ENCODE measurements at regions of chrX and their contacts with region 1.

Region 1: DNA sequence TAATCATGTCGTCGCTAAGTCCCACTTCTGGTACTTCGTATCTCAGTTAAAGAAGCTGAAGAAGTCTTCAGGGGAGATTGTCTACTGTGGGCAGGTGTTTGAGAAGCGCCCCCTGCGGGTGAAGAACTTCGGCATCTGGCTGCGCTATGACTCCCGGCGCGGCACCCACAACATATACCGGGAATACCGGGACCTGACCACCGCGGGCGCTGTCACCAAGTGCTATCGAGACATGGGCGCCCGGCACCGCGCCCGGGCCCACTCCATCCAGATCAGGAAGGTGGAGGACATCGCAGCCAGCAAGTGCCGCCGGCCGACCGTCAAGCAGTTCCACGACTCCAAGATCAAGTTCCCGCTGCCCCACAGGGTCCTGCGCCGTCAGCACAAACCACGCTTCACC is 11.3 kb downstream of the PNCK start:
- DNase-seq: peak; percentile 60
- H3K4me3 Mint-ChIP-seq: no peak overlapping the region
- H3K27ac Mint-ChIP-seq: no peak overlapping the region
- H3K4me1 Mint-ChIP-seq: peaks cover 7% of the 10 kb centered on the region
- H3K27me3 Mint-ChIP-seq: peaks cover 80% of the 10 kb centered on the region
- CTCF ChIP-seq: peak; percentile 24

Region 2: DNA sequence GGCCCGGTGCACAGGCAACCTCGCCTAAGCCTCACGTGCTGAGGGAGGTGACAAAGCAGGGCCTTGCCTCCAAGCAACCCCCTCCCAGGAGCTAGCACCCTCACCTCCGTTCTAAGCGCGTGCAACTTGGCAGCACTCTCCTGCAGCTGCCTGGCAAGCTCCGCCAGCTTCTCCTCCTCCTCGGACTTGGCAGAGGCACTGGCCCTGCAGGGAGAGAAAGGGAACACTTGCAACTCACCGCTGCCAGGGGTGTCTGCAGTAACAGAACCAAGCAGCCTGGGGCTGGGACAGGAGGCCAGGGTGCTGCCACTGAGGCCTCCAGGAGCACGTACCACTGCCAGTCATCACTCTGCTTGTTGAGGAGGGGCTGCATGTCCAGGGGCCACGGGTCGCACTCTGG is 206.1 kb before region 1 on chrX:
- CTCF ChIA-PET with region 1: no interaction called
- intact Hi-C with region 1: no loop called
- DNase-seq: no peak
- H3K4me3 Mint-ChIP-seq: no peak overlapping the region
- H3K27ac Mint-ChIP-seq: no peak overlapping the region
- H3K4me1 Mint-ChIP-seq: no peaks in the 10 kb centered on the region
- H3K27me3 Mint-ChIP-seq: no peaks in the 10 kb centered on the region
- CTCF ChIP-seq: no peak

Region 3: GRCh38 chrX:153554519-153555167 is 107.6 kb before region 1 on chrX:
- CTCF ChIA-PET with region 1: interaction called, 7 read pairs
- intact Hi-C with region 1: loop called (anchors 2 kb)
- DNase-seq: peak; percentile 72
- H3K4me3 Mint-ChIP-seq: no peak overlapping the region
- H3K27ac Mint-ChIP-seq: no peak overlapping the region
- H3K4me1 Mint-ChIP-seq: no peaks in the 10 kb centered on the region
- H3K27me3 Mint-ChIP-seq: peaks cover 98% of the 10 kb centered on the region
- CTCF ChIP-seq: peak; percentile 76

Region 4: DNA sequence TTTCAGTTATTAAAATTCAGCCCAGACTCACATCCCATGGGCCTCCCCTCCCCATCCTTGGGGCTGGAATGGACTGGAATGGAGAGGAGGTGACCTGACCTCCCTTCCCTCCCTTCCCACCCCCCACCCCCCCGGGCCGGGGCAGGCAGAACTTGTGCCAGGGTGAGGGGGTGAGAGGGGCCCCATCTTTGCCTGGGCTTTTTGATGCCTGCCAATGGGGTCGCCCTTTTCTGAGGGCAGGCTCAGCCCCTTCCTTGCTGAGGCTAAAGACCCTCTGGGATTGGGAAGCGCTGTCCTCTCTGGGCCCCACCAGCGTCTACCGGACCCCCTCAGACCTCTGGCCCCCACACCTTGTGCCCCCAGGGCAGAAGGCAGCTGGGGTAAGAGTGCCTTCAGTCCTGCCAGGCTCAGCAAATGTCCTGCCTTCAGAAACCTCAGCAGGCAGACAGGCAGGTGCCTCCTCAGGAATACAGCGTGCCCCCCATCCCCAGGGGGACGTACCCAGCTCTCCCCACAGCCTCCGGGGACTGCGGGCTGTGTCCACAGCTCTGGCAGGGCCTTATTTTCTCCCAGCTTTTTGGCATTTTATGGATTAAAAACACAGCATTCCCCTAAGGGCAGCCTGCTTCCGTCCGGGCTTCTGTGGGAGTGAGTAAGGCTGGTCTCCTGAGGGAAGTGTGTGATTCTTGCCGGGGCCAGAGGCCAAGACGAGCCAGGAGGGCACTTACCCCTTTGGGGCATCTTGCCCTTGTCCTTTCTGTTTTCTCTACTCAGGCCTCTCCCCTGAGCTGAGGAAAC is 50.8 kb before region 1 on chrX:
- CTCF ChIA-PET with region 1: no interaction called
- intact Hi-C with region 1: loop called (anchors 2 kb)
- DNase-seq: no peak
- H3K4me3 Mint-ChIP-seq: no peak overlapping the region
- H3K27ac Mint-ChIP-seq: no peak overlapping the region
- H3K4me1 Mint-ChIP-seq: no peaks in the 10 kb centered on the region
- H3K27me3 Mint-ChIP-seq: peaks cover 72% of the 10 kb centered on the region
- CTCF ChIP-seq: no peak

Measured in Calu3 (cell line).